Mammary epithelial cell (primary cell): ENCODE measurements at regions of chr1 and their contacts with region 1.

Region 1: GRCh38 chr1:8238851-8239305 is 79.0 kb upstream of the SLC45A1 start:
- DNase-seq: peak; percentile 58
- H3K4me3 ChIP-seq: no peak overlapping the region
- H3K27ac ChIP-seq: no peak overlapping the region
- H3K4me1 ChIP-seq: peaks cover 15% of the 10 kb centered on the region
- H3K27me3 ChIP-seq: no peaks in the 10 kb centered on the region
- CTCF ChIP-seq: peak; percentile 26 to 61

Region 2: DNA sequence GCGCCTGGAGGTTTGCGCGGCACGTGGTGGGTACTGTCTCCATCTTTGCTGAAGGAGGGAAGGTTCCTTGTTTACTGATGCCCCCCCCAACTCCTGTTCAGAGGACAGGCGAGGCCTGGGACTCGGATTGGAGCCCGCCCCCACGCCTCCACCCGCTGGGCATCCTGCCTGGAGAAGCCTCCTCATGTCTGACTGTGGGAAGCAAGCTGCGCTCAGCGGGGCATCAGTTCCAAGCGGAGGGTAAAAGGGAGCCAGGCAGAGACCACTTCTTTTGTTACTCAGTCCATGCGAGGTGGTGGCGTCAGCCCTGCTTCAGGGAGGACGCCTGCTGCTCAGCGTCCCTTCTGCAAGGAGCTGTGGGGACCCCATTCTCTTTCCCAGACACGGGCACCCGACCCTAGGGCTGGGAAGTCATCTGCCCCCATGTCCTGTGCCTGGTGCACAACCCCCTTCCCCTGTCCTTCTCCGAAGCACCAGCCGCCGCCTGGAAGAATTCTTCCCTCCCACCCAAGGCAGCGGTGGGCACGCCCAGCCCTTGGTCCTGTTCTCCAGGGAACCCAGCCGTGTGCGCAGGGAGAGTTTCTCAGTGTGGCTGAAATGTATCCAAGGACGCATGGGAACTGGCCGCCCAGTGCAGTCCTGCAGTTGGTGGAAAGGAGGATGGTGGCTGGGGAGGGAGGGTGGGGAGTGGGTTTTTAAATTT is 1039.7 kb before region 1 on chr1:
- CTCF ChIA-PET with region 1: no interaction called
- dilution Hi-C with region 1: no loop called
- in situ Hi-C with region 1: no loop called
- intact Hi-C with region 1: no loop called
- DNase-seq: no peak
- H3K4me3 ChIP-seq: no peak overlapping the region
- H3K27ac ChIP-seq: no peak overlapping the region
- H3K4me1 ChIP-seq: no peaks in the 10 kb centered on the region
- H3K27me3 ChIP-seq: peaks cover 2% of the 10 kb centered on the region
- CTCF ChIP-seq: no peak

Region 3: GRCh38 chr1:7983086-7983778 is 255.6 kb before region 1 on chr1:
- CTCF ChIA-PET with region 1: no interaction called
- dilution Hi-C with region 1: no loop called
- in situ Hi-C with region 1: no loop called
- intact Hi-C with region 1: loop called (anchors 2 kb)
- DNase-seq: no peak
- H3K4me3 ChIP-seq: no peak overlapping the region
- H3K27ac ChIP-seq: no peak overlapping the region
- H3K4me1 ChIP-seq: peaks cover 3% of the 10 kb centered on the region
- H3K27me3 ChIP-seq: no peaks in the 10 kb centered on the region
- CTCF ChIP-seq: no peak

Region 4: GRCh38 chr1:8026153-8026975 is 212.5 kb before region 1 on chr1 and contains the start of gene ERRFI1:
- CTCF ChIA-PET with region 1: no interaction called
- dilution Hi-C with region 1: no loop called
- in situ Hi-C with region 1: loop called in 1 of 2 experiments (anchors 10 kb)
- intact Hi-C with region 1: loop called (anchors 1 kb)
- DNase-seq: peak; percentile 93
- H3K4me3 ChIP-seq: peak within 1 kb of the TSS; percentile 69 to 96 (median 90)
- H3K27ac ChIP-seq: peak within 1 kb of the TSS; percentile 93
- H3K4me1 ChIP-seq: peaks cover 46% of the 10 kb centered on the region
- H3K27me3 ChIP-seq: no peaks in the 10 kb centered on the region
- CTCF ChIP-seq: no peak
- total RNA-seq, gene ERRFI1: 38.8 to 150 TPM

Region 5: GRCh38 chr1:8154621-8155052 is 84.2 kb before region 1 on chr1:
- CTCF ChIA-PET with region 1: interaction called, 11 read pairs
- dilution Hi-C with region 1: no loop called
- in situ Hi-C with region 1: no loop called
- intact Hi-C with region 1: no loop called
- DNase-seq: peak; percentile 96
- H3K4me3 ChIP-seq: no peak overlapping the region
- H3K27ac ChIP-seq: peak overlapping the region; percentile 71
- H3K4me1 ChIP-seq: peaks cover 23% of the 10 kb centered on the region
- H3K27me3 ChIP-seq: no peaks in the 10 kb centered on the region
- CTCF ChIP-seq: no peak

Region 6: DNA sequence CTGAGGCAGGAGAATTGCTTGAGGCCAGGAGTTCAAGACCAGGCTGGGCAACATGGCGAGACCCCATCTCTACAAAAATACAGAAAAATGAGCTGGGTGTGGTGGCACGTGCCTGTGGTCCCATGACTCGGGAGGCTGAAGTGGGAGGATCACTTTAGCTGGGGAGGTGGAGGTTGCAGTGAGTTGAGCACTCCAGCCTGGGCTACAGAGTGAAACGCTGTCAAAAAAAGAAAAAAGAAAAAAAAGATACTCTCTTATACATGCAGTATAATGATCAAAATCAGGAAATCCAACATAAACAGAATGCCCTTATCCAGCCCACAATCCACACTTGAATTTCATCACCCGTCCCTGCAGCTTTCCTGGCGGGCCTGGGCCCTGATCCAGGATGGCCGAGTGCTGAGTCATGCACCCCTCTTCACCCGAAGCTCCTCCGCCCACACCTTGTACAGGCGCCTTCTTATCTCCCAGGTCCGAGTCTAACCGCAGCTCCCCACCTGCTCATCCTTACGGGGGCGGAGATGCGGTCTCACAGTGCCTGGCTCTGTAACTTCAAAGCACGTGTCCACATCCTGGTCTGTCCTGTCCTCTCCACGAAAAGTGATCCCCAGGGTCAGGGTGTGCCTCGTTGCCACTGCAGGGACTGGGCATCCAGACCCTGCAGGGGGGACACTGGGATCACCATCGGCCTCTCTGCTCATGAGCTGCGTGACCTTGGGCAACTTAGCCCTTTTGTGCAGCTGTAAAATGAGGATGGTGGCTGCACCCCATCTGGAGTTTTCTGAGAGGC is 41.2 kb before region 1 on chr1:
- CTCF ChIA-PET with region 1: no interaction called
- dilution Hi-C with region 1: no loop called
- in situ Hi-C with region 1: no loop called
- intact Hi-C with region 1: no loop called
- DNase-seq: peak; percentile 94
- H3K4me3 ChIP-seq: no peak overlapping the region
- H3K27ac ChIP-seq: peak overlapping the region; percentile 25
- H3K4me1 ChIP-seq: peaks cover 45% of the 10 kb centered on the region
- H3K27me3 ChIP-seq: no peaks in the 10 kb centered on the region
- CTCF ChIP-seq: no peak

Region 7: DNA sequence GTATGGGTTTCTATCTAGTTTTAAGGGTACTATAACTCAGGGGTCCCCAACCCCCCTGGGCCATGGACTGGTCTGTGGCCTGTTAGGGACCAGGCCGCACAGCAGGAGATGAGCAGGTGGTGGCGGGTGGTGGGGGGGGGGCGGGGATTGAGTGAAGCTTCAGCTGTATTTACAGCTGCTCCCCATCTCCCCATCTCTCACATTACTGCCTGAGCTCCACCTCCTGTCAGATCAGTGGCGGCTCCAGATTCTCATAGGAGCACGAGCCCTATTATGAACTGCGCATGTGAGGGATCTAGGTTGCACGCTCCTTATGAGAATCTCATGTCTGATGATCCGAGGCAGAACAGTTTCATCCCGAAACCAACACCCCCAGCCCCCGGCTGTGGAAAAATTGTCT is 16.1 kb before region 1 on chr1:
- CTCF ChIA-PET with region 1: no interaction called
- dilution Hi-C with region 1: no loop called
- in situ Hi-C with region 1: no loop called
- intact Hi-C with region 1: no loop called
- DNase-seq: no peak
- H3K4me3 ChIP-seq: no peak overlapping the region
- H3K27ac ChIP-seq: no peak overlapping the region
- H3K4me1 ChIP-seq: peaks cover 30% of the 10 kb centered on the region
- H3K27me3 ChIP-seq: no peaks in the 10 kb centered on the region
- CTCF ChIP-seq: no peak

Region 8: DNA sequence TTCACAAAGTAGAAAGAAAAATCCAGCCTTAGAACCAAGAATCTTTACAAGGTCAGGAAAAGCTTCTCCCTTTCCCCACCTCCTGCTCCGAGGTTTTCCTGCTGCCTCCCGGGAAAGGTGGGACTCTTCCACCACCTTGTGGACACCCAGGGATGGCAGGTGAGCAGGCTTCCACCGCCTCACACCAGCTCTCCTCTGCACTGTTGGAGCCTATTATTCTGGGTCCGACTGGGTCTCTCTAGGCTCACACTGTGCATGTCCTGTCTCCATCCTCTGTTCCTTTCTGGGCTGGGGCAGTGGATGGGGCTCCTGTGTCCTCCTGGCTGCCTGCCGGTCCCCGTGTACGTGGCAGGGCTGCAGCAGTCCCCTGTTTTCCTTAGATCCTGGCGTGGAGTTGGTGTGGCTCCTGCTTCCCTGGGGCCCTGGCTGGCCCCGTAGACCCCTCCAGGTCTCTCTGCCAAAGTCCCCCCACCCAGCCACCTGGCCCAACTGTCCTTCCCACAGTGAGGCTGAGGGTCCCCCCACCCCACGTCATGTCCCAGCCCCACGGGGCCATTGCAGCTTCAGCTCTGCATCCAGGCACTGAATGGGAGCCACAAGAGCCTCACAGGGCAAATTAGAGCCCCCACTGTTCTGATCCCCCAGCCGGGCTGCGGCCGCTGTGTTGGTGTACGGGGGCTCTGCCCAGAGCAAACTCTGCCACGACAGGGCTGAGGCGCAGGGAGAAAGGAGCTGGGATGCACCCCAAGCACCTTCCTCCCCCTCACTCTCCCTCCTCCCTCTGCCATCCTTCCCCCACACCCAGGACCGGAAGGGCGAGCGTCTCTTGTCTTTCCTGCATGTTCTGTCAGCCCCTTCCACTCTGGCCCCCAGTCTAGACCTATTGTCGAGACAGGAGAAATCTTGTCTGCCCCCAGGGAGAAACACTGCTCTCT is 75.7 kb after region 1 on chr1:
- CTCF ChIA-PET with region 1: no interaction called
- dilution Hi-C with region 1: no loop called
- in situ Hi-C with region 1: no loop called
- intact Hi-C with region 1: loop called (anchors 2 kb)
- DNase-seq: peak; percentile 62
- H3K4me3 ChIP-seq: no peak overlapping the region
- H3K27ac ChIP-seq: no peak overlapping the region
- H3K4me1 ChIP-seq: peaks cover 19% of the 10 kb centered on the region
- H3K27me3 ChIP-seq: no peaks in the 10 kb centered on the region
- CTCF ChIP-seq: peak; percentile 95 to 97